ENCODE measurements at regions of chr5 and their contacts with region 1.

Region 1: GRCh38 chr5:160508780-160509361 is 87.2 kb downstream of the PTTG1 start:
- DNase-seq: peak; percentile 76
- ATAC-seq: peak; percentile 88
- H3K4me3 ChIP-seq: no peak overlapping the region
- H3K27ac ChIP-seq: no peak overlapping the region
- H3K4me1 ChIP-seq: peaks cover 15% of the 10 kb centered on the region; the same call in 1 of the 2 replicates
- H3K27me3 ChIP-seq: no peaks in the 10 kb centered on the region
- CTCF ChIP-seq: peak; percentile 76 to 94 (median 92)
- EP300 ChIP-seq: no peak
- POLR2A ChIP-seq: no peak
- RAD21 ChIP-seq: peak; percentile 99

Region 2: DNA sequence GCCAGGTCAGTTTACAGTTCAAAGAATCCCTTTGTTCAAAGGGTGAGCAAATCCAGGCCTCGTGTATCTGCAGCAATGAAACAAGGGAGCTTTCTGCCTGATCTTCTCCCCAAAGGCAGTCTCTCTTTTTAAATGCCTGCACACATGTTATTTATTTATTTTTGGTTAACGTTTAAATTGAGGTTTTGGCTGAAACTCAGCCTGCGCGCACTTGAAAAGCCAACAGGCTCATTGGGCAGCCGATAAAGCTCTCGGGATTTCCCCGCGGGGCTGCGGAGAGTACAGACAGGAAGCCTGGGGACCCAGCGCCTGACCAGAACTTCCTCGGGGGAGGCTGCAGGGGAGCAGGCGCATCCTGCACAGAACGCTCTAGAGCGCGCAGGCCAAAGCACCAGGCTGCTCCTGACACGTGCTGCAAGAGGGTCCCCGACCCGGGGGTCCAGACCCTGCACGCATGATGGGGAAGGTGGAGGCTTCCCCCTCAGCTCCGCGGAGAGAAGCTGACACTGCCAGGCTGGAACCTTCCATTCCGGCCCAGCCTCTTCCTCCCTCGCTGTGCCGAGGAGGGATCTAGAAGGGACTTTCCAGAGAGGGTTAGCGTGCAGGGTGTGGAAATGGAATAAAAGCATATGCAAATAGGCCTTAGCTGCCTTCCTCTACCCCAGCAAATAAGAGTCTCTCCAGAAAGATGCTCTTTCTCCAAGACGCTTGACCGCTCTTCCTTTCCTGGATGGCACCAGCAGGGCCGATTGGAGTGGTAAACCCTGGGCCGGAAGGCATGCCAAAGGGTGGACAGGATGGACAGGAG is 41.1 kb before region 1 on chr5:
- CTCF ChIA-PET with region 1: interaction called, 29 read pairs
- POLR2A ChIA-PET with region 1: interaction called, 15 read pairs
- RAD21 ChIA-PET with region 1: interaction called, 50 read pairs
- SMC1A ChIA-PET with region 1: interaction called, 25 read pairs
- in situ Hi-C with region 1: no loop called
- intact Hi-C with region 1: loop called (anchors 2 kb)
- DNase-seq: peak; percentile 96
- ATAC-seq: peak; percentile 80
- H3K4me3 ChIP-seq: peak overlapping the region; percentile 88
- H3K27ac ChIP-seq: peak overlapping the region; percentile 96
- H3K4me1 ChIP-seq: peaks cover 35% of the 10 kb centered on the region
- H3K27me3 ChIP-seq: no peaks in the 10 kb centered on the region
- CTCF ChIP-seq: no peak
- EP300 ChIP-seq: peak; percentile 84 to 95
- POLR2A ChIP-seq: peak; percentile 91
- RAD21 ChIP-seq: peak; percentile 8; the same call in 1 of the 2 replicates

Region 3: DNA sequence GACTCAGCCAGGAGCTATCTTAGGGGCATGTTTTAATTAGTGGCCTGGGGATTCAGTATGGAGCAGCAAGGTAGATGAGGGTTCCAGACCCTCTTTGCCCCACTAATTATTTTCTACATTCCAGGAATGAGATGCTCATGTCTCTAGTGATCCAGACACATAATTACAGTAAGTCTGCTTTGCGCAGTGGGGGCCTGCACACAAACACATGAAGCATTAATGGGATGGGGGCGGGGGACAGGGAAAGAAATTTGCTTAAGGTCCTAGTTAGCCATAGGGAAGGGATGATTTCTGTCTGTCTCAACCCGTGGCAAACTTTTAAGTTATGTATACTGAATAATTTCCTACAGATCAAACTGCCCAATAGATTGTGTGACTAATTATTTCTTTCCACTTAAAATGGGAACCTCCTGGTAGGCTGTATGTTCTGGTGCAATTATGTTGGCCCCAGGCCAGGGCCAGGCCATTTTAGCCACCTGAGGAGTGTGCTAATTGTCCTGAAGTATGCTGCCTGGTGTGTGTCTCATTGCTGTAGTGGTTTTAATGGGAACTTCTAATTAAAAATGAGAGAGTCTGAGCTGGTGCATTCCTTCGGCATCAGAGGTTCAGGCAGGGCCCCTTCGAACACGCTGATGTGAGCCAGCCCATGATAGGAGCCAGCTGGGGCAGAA is 47.2 kb after region 1 on chr5:
- CTCF ChIA-PET with region 1: no interaction called
- POLR2A ChIA-PET with region 1: no interaction called
- RAD21 ChIA-PET with region 1: no interaction called
- SMC1A ChIA-PET with region 1: no interaction called
- in situ Hi-C with region 1: no loop called
- intact Hi-C with region 1: no loop called
- DNase-seq: no peak
- ATAC-seq: no peak
- H3K4me3 ChIP-seq: no peak overlapping the region
- H3K27ac ChIP-seq: no peak overlapping the region
- H3K4me1 ChIP-seq: no peaks in the 10 kb centered on the region
- H3K27me3 ChIP-seq: no peaks in the 10 kb centered on the region
- CTCF ChIP-seq: no peak
- EP300 ChIP-seq: no peak
- POLR2A ChIP-seq: no peak
- RAD21 ChIP-seq: no peak

Region 4: GRCh38 chr5:160649304-160649703 is 140.4 kb after region 1 on chr5:
- CTCF ChIA-PET with region 1: interaction called, 9 read pairs
- POLR2A ChIA-PET with region 1: no interaction called
- RAD21 ChIA-PET with region 1: no interaction called
- SMC1A ChIA-PET with region 1: interaction called, 5 read pairs
- in situ Hi-C with region 1: no loop called
- intact Hi-C with region 1: loop called (anchors 10 kb)
- DNase-seq: no peak
- ATAC-seq: peak; percentile 84
- H3K4me3 ChIP-seq: no peak overlapping the region
- H3K27ac ChIP-seq: no peak overlapping the region
- H3K4me1 ChIP-seq: no peaks in the 10 kb centered on the region
- H3K27me3 ChIP-seq: no peaks in the 10 kb centered on the region
- CTCF ChIP-seq: peak; percentile 36 to 45 (median 39); a peak in 4 of 6 replicates
- EP300 ChIP-seq: no peak
- POLR2A ChIP-seq: no peak
- RAD21 ChIP-seq: peak; percentile 45

Region 5: GRCh38 chr5:160802592-160802991 is 293.7 kb after region 1 on chr5:
- CTCF ChIA-PET with region 1: interaction called, 7 read pairs
- POLR2A ChIA-PET with region 1: no interaction called
- RAD21 ChIA-PET with region 1: interaction called, 5 read pairs
- SMC1A ChIA-PET with region 1: interaction called, 10 read pairs
- in situ Hi-C with region 1: no loop called
- intact Hi-C with region 1: no loop called
- DNase-seq: no peak
- ATAC-seq: peak; percentile 73
- H3K4me3 ChIP-seq: no peak overlapping the region
- H3K27ac ChIP-seq: no peak overlapping the region
- H3K4me1 ChIP-seq: no peaks in the 10 kb centered on the region; the same call in 1 of the 2 replicates
- H3K27me3 ChIP-seq: no peaks in the 10 kb centered on the region
- CTCF ChIP-seq: peak; percentile 24 to 70 (median 34); a peak in 3 of 6 replicates
- EP300 ChIP-seq: no peak
- POLR2A ChIP-seq: no peak
- RAD21 ChIP-seq: peak; percentile 56

Region 6: DNA sequence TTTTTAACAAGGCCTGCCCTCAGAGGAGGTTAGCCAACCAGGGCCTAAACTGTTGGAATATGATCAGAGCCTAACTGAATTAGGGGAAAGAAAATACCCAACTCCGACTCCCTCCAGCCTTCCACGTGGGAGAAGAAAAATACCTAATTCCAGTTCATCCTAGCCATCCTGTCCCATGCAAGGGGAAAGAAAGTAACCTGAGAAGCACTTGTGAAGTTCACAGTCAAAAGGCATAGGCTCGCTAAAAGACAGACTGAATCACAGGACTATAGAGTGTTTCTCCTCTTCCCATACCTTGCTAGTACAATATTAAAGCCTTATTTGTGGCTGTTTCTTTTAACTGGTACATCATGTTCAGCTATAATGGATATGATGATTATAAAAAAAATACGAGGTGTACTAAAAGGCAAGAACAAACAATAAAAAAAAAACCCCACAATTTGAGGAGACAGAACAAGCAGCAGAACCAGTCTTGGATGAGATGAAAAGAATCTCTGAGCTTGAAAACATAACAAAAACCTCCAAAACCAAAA is 361.2 kb after region 1 on chr5:
- CTCF ChIA-PET with region 1: no interaction called
- POLR2A ChIA-PET with region 1: no interaction called
- RAD21 ChIA-PET with region 1: no interaction called
- SMC1A ChIA-PET with region 1: no interaction called
- in situ Hi-C with region 1: no loop called
- intact Hi-C with region 1: no loop called
- DNase-seq: no peak
- ATAC-seq: no peak
- H3K4me3 ChIP-seq: no peak overlapping the region
- H3K27ac ChIP-seq: no peak overlapping the region
- H3K4me1 ChIP-seq: no peaks in the 10 kb centered on the region
- H3K27me3 ChIP-seq: no peaks in the 10 kb centered on the region
- CTCF ChIP-seq: no peak
- EP300 ChIP-seq: no peak
- POLR2A ChIP-seq: no peak
- RAD21 ChIP-seq: no peak

Region 7: GRCh38 chr5:161544350-161544765 is 1035.5 kb after region 1 on chr5:
- CTCF ChIA-PET with region 1: no interaction called
- POLR2A ChIA-PET with region 1: no interaction called
- RAD21 ChIA-PET with region 1: interaction called, 3 read pairs
- SMC1A ChIA-PET with region 1: no interaction called
- in situ Hi-C with region 1: no loop called
- intact Hi-C with region 1: loop called (anchors 5 kb)
- DNase-seq: no peak
- ATAC-seq: peak; percentile 66
- H3K4me3 ChIP-seq: no peak overlapping the region
- H3K27ac ChIP-seq: no peak overlapping the region
- H3K4me1 ChIP-seq: no peaks in the 10 kb centered on the region
- H3K27me3 ChIP-seq: peaks cover 3 to 8% of the 10 kb centered on the region in 2 experiments; a peak in 2 of 4 replicates
- CTCF ChIP-seq: peak; percentile 75 to 94 (median 90)
- EP300 ChIP-seq: no peak
- POLR2A ChIP-seq: no peak
- RAD21 ChIP-seq: peak; percentile 64

Measured in GM12878 (cell line).